Activated CD4-positive, alpha-beta memory T cell treated with anti-CD3 and anti-CD28 coated beads for 36 hours (primary cell): ENCODE measurements at regions of chr2 and their contacts with region 1.

Region 1: DNA sequence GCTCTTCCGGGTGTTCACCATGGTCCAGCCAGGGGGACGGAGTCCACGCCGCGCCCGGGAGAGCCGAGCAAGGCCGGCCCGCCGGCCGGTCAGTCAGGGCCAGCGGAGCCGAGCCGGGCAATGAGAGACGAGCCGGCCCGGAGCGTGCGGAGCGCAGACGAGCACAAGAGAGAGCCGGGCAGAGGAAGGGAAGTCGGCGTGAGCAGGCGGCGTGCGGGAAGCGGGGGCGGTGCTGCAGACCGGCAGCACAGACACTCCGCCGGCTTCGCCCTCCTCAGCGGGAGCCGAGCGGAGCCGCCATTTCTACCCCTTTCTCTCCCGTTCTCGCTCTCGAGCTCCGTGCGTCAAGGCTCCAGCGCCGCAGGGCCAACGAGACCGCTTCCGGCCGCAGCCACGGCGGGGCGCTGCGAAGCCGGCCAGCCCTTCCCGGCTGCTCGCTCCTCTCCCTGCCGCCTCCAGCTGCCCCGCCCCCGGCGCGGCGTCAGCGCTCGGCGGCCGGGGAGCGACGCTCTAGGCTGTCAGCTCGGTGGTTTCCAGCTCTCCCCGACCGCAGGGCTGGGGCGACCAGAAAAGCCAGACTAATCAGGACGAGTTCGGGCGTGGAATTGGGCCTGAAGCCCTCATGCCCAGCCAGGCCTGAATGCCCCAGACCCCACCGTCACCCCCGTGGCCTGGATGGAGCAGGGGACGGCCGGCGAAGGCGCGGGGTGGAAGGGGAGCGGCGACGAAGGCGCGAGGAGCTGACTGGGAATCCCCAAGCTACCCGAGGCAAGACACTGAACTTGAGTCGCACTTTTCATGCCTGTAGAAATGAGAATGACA is at the start of gene ATAD2B:
- DNase-seq: peak; percentile 96
- H3K4me3 Mint-ChIP-seq: peak within 1 kb of the TSS; percentile 99
- H3K27ac Mint-ChIP-seq: peak within 1 kb of the TSS; percentile 99
- H3K4me1 Mint-ChIP-seq: peaks cover 42% of the 10 kb centered on the region
- H3K27me3 Mint-ChIP-seq: no peaks in the 10 kb centered on the region
- total RNA-seq, gene ATAD2B: 13.2 to 14.3 TPM

Region 2: DNA sequence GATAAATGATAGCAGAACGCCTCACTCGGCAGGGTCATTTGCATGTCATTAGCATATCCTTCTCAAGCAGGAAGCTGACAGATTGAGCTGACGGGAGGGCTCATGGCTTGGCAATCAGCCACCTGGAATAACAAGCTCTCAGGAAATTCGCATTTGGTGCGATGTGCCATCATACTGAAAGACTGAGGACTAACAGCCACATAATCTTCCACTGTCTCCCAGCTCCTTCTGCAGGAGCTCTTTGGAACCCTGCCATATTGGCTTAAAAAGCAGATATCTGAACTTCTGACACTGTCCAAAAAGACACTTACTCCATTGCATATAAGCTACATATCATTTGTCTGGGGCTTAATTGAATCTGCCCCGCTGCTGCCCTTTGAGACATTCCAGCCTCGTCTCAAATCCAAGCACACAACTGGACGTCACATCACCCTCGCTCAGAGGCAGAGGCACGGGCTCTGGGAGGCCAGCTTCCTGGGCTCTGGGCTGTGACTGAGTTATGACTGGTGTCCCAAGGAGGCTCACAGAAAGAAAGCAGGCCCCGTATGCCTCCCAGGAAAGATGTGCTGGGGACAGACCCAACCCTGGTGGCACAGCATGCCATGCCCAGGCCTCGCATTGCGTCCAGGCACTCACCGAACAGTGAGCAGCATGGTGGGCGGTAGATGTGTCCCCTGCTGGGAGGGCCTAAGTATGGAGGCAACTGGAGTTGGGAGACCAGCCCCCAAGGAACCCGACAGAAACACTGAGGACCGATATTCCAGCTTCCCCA is 228.1 kb before region 1 on chr2:
- CTCF ChIA-PET with region 1: no interaction called
- POLR2A ChIA-PET with region 1: no interaction called
- intact Hi-C with region 1: no loop called
- DNase-seq: no peak
- H3K4me3 Mint-ChIP-seq: no peak overlapping the region
- H3K27ac Mint-ChIP-seq: no peak overlapping the region
- H3K4me1 Mint-ChIP-seq: no peaks in the 10 kb centered on the region
- H3K27me3 Mint-ChIP-seq: no peaks in the 10 kb centered on the region

Region 3: GRCh38 chr2:23850564-23851256 is 76.3 kb before region 1 on chr2:
- CTCF ChIA-PET with region 1: interaction called, 3 read pairs
- POLR2A ChIA-PET with region 1: no interaction called
- intact Hi-C with region 1: loop called (anchors 5 kb)
- DNase-seq: no peak
- H3K4me3 Mint-ChIP-seq: no peak overlapping the region
- H3K27ac Mint-ChIP-seq: no peak overlapping the region
- H3K4me1 Mint-ChIP-seq: peaks cover 6% of the 10 kb centered on the region
- H3K27me3 Mint-ChIP-seq: no peaks in the 10 kb centered on the region

Region 4: DNA sequence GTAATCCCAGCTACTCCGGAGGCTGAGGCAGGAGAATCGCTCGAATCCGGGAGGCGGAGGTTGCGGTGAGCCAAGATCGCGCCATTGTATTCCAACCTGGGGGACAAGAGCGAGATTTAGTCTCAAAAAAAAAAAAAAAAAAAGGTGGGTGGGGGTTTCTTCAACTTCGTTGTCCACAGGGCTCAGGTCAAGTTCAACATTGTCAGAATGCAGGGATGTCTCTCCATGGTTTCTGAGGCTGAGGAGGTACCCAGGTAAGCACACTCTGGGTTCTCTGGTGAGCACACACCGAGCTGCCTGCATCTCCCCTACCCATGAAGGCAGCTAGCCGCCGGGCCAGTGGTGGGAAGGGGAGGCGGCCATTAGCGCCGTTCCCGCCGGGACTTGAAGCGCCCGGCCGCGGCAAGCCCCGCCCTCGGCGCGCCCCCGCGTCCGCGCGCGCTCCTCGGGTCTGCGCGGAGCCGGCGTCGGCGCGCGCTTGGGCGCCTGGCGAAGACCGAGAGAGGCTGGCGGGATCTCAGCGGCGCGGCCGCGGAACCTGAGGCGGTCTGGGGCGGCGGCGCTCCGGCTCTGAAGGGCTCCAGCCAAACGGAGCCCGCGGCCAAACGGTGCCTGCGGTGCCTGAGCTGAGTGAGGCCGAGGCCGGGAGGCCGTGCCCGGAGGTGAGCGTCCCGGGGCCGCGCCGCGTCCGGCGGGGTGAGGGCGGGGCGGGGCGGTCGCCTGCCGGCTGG is 13.2 kb after region 1 on chr2 and contains the start of gene UBXN2A:
- CTCF ChIA-PET with region 1: interaction called, 57 read pairs
- POLR2A ChIA-PET with region 1: interaction called, 116 read pairs
- intact Hi-C with region 1: loop called (anchors 1 kb)
- DNase-seq: peak; percentile 79
- H3K4me3 Mint-ChIP-seq: peak within 1 kb of the TSS; percentile 86
- H3K27ac Mint-ChIP-seq: peak within 1 kb of the TSS; percentile 82
- H3K4me1 Mint-ChIP-seq: peaks cover 20% of the 10 kb centered on the region
- H3K27me3 Mint-ChIP-seq: peaks cover 5% of the 10 kb centered on the region
- total RNA-seq, gene UBXN2A: 11.8 to 12.2 TPM

Region 5: DNA sequence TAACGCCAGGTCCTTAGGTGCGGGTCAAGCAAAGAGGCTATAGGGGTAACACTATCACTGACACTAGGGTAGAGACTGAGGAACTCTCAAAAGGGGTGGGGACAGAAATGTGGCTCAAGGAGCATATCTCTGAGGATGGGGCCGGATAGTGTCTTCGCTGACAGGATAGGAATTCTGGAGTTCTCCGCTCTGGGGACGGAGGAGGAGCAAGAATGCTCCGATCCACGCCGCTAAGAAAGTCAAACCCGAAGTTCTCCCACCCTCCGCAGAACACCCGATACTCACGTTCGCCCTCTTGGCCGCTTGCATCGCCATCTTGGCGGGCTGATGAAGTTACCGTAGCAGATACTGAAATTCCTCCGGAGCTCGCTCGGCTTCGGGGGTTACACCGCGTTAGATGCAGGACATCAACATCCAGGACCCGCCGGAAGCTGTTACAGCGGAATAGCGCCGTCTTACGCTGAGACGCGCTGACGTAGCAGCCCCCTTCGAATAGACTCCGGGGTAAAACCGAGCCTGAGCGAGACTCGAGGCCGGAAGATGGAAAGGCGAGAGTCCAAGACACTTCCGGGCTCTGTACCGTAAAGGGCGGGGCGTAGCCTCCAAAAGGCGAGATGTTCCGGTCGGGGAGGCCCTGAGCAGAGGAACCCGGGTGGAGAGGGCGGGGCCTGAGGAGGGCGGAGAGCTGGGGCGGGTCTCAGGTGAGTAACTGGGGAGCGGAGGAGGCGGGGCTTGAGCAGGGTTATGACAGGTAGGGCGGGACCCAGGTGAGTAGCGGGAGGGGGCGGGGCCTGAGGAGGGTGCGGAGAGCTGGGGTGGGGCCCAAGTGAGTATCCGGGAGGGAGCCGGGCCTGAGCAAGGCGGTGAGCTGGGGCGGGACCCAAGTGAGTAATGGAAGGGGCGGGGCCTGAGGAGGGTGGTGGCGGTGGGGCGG is 149.2 kb after region 1 on chr2 and contains the start of gene SF3B6:
- CTCF ChIA-PET with region 1: interaction called, 82 read pairs
- POLR2A ChIA-PET with region 1: interaction called, 34 read pairs
- intact Hi-C with region 1: loop called (anchors 1 kb)
- DNase-seq: peak; percentile 100
- H3K4me3 Mint-ChIP-seq: peak within 1 kb of the TSS; percentile 93
- H3K27ac Mint-ChIP-seq: peak within 1 kb of the TSS; percentile 89
- H3K4me1 Mint-ChIP-seq: peaks cover 32% of the 10 kb centered on the region
- H3K27me3 Mint-ChIP-seq: no peaks in the 10 kb centered on the region
- total RNA-seq, gene SF3B6: 145 to 148 TPM

Region 6: GRCh38 chr2:24123195-24123921 is 196.4 kb after region 1 on chr2 and contains the starts of genes FAM228B and PFN4:
- CTCF ChIA-PET with region 1: no interaction called
- POLR2A ChIA-PET with region 1: interaction called, 11 read pairs
- intact Hi-C with region 1: no loop called
- DNase-seq: peak; percentile 82
- H3K4me3 Mint-ChIP-seq: peak within 1 kb of the TSS; percentile 72
- H3K27ac Mint-ChIP-seq: no peak within 1 kb of the TSS
- H3K4me1 Mint-ChIP-seq: peaks cover 10% of the 10 kb centered on the region
- H3K27me3 Mint-ChIP-seq: no peaks in the 10 kb centered on the region
- total RNA-seq, gene FAM228B: 6.5 to 7.2 TPM
- total RNA-seq, gene PFN4: 0.40 TPM in 1 of 2 experiments, not detected in the other

Region 7: DNA sequence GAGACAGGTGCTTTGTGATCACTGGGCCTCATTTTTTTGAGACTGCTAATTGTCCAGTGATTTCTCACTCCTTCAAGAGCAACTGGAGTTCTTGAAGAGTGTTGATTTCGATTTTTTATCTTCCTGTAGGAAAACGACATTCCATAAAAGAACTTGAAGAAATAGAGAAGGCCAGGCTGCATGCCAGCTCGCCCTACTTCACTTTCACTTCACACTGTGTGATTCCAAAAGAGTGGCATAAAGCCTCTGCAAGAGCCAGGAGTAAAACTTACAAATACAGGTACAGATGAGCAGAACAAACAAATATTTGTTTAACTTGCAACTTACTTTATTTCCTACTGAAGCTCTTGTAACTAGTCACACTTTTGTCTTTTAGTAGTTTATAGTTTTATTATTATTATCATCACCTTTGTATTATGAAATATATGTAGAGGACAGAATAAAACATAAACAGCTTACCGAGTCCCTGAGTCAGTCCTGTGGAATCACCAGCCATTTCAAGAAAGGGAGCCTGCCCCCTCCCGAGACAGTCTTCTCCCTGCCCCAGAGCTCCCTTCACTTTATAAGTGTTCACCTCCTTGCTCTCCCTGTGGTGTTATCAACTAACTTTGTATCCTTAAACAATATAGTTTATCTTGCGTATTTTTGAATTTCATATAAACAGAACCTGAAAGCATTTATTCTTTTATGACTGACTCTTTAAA is 256.6 kb after region 1 on chr2:
- CTCF ChIA-PET with region 1: no interaction called
- POLR2A ChIA-PET with region 1: no interaction called
- intact Hi-C with region 1: no loop called
- DNase-seq: no peak
- H3K4me3 Mint-ChIP-seq: no peak overlapping the region
- H3K27ac Mint-ChIP-seq: no peak overlapping the region
- H3K4me1 Mint-ChIP-seq: no peaks in the 10 kb centered on the region
- H3K27me3 Mint-ChIP-seq: no peaks in the 10 kb centered on the region

Region 8: DNA sequence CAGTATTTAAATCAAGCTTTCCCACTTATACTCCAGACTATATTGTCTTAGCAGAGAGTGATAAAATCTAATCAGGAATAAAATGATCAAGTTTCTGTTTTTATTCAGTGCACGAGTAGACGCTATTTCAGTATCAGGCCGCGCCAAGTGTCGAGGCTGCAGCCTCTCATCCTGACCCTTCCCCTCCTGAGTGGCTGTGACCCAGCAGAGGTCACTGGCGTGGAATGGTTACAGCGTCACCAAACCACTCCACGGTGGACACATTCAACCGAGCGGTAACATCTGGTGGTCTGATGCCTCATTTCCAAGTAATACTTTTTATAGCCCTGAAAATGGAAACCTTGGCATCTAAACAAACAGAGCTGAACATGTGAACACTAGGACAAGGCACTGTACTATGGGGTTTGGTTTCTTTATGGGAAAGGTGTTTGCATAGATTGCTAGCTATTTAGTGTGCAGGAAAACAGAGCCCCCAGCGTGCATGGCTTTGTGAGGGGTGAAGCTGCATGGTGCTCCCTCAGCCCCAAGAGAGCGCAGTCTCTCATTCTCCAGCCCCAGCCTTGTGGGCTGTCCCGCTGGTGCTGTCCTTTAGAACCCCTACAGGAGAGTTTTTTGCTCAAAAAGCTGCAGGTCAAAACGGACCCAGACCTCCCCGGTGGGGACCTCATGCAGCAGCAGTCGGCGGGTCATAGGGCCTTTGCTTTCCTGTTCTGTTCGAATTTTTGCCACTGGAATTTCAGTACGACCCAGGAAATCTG is 276.2 kb after region 1 on chr2:
- CTCF ChIA-PET with region 1: no interaction called
- POLR2A ChIA-PET with region 1: no interaction called
- intact Hi-C with region 1: no loop called
- DNase-seq: no peak
- H3K4me3 Mint-ChIP-seq: no peak overlapping the region
- H3K27ac Mint-ChIP-seq: no peak overlapping the region
- H3K4me1 Mint-ChIP-seq: no peaks in the 10 kb centered on the region
- H3K27me3 Mint-ChIP-seq: no peaks in the 10 kb centered on the region

Region 9: DNA sequence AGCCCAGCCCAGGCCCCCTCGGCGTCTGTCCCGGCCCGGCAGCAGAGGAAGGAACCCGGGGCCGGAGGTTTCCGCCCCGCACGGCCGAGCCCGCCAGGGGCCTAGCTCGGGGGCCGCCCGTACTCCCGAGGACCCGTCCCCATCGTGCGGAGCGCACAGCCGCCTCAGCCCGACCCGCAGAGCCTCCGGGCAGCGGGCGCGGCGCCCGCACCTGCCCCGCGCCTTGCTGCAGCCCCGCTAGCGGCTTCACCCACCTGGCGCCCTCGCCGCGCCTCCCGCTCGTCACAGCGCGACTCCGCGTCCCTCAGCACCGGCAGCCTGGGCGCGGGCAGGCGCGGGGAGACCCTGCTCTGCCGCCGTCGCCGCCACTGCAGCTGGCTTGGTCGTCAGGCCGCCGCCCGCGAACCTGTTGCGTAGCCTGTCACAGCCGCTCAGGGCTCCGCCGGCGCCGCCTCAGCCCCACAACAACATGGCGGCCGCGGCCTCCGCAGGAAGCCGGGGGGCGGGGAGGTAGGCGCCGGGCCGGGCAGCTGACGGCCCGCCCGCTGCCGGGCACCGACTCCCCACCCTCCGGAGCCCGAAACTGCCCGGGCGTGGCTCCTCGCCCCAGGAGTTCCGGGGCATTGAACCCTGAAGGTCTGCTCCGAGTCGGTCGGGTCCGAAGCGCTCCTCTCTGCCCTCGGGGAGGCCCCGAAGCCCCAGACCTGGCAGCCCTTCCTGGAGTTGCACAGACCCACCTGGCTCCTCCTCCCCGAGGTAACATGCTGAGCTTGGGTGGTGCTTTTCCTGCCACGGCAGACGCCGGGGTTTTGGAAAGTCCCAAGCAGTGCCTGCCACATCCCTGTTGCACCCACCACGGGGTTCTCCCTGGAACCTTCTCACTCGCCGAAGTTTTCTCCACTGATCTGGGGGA is 433.3 kb after region 1 on chr2 and contains the start of gene ITSN2:
- CTCF ChIA-PET with region 1: interaction called, 3 read pairs
- POLR2A ChIA-PET with region 1: interaction called, 5 read pairs
- intact Hi-C with region 1: loop called (anchors 5 kb)
- DNase-seq: peak; percentile 86
- H3K4me3 Mint-ChIP-seq: peak within 1 kb of the TSS; percentile 85
- H3K27ac Mint-ChIP-seq: peak within 1 kb of the TSS; percentile 92
- H3K4me1 Mint-ChIP-seq: peaks cover 28% of the 10 kb centered on the region
- H3K27me3 Mint-ChIP-seq: no peaks in the 10 kb centered on the region
- total RNA-seq, gene ITSN2: 60.4 to 61.0 TPM